HepG2 (cell line): ENCODE measurements at regions of chr7 and their contacts with region 1.

Region 1: GRCh38 chr7:37916673-37917660 is at the start of gene SFRP4:
- DNase-seq: peak; percentile 76
- ATAC-seq: peak; percentile 68
- H3K4me3 ChIP-seq: peak within 1 kb of the TSS; percentile 72 to 82 (median 73)
- H3K27ac ChIP-seq: peak within 1 kb of the TSS; percentile 65
- H3K4me1 ChIP-seq: peaks cover 45% of the 10 kb centered on the region
- H3K27me3 ChIP-seq: no peaks in the 10 kb centered on the region
- CTCF ChIP-seq: peak; percentile 83
- EP300 ChIP-seq: 0 out of 4 replicates have a peak, but pooled peaks of 1 of the 2 experiments have one; percentile 4
- POLR2A ChIP-seq: no peak; a peak in 1 of 4 replicates
- RAD21 ChIP-seq: peak; percentile 61; the same call in 1 of the 2 replicates
- total RNA-seq, gene SFRP4: 1.2 and 1.8 TPM in 2 replicates

Region 2: DNA sequence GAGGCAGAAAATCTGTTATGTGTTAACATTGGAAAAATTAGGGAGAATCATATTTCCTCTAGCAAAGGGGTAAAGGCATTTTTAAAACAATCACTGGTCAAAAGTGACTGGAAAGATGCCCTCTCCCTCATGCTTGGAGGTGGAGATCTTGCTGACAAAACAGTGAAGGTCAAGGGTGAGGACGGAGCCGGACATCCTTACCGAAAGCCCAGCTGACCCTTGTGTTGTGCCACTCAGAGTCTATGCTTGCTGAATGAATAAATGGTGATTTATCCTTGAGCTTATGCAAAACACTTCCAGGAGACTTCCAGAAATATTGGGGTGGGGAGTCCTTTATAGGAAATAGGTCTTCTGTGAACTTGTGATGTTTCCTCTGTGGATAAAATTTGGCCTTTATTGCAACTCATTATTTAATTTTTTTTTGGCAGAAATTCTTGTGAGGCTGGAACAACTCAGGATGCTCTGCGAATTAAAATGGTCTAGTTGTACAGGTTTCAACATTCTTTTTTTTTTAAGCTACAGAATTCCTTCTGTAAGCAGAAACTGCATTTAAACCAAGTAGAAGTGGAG is 440.0 kb before region 1 on chr7:
- CTCF ChIA-PET with region 1: no interaction called
- POLR2A ChIA-PET with region 1: no interaction called
- in situ Hi-C with region 1: no loop called
- intact Hi-C with region 1: no loop called
- DNase-seq: no peak
- ATAC-seq: no peak
- H3K4me3 ChIP-seq: no peak overlapping the region
- H3K27ac ChIP-seq: no peak overlapping the region
- H3K4me1 ChIP-seq: no peaks in the 10 kb centered on the region
- H3K27me3 ChIP-seq: no peaks in the 10 kb centered on the region
- CTCF ChIP-seq: no peak
- EP300 ChIP-seq: no peak
- POLR2A ChIP-seq: no peak
- RAD21 ChIP-seq: no peak

Region 3: DNA sequence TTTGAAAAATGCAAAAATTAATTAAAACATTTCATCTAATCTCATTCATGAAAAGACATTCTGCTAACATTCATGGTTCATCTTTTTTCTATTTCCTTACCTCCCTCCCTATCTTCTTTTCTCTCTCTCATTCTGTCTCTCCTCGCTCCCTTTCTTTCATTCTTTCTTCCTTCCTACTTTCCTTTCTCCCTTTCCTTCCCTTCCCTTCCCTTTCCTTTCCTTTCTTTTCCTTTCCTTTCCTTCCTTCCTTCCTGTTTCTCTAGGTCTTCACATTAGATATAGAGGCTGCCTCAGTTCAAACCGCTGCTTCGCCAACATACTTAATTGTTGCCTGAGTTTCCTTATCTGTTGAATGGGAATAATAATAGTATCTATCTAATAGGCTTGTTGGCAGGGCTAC is 22.3 kb before region 1 on chr7:
- CTCF ChIA-PET with region 1: no interaction called
- POLR2A ChIA-PET with region 1: no interaction called
- in situ Hi-C with region 1: no loop called
- intact Hi-C with region 1: no loop called
- DNase-seq: no peak
- ATAC-seq: no peak
- H3K4me3 ChIP-seq: no peak overlapping the region
- H3K27ac ChIP-seq: no peak overlapping the region
- H3K4me1 ChIP-seq: peaks cover under 1% of the 10 kb centered on the region; the same call in 1 of the 2 replicates
- H3K27me3 ChIP-seq: no peaks in the 10 kb centered on the region; a peak in 1 of 5 replicates
- CTCF ChIP-seq: no peak
- EP300 ChIP-seq: no peak
- POLR2A ChIP-seq: no peak
- RAD21 ChIP-seq: no peak

Region 4: DNA sequence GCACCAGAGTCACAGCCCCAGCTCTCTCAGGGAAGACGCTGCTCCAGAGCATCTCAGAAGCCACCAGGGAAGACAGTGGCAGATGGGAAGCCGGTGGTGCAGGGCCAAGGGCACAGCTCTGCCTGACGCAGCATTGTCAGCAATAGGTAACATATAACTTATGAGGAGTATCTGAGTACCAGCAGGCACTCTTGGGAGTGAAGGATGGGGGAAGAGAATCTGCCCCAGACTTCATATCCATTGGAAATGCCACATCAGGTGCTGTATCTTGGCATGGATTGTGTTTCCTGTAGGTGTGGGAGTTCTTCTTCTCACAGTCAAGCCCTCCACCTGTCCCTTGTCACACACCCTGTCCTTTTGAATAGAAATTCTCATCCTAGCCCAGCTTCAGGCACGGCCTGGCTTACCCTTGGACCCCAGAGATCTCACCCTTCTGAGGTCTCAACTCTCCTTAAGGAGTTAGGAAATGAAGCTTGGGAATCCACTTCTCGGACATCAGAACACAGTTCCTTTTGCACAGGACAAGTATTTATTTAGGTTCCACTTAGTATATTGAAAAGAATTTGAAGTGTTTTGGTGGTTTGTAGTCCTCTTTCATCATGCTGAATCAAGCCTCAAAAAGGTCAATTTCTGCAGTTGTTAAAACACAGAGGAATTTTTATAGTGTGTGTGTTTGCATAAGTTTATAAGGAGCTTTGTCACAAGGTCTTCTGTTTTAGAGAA is 13.4 kb after region 1 on chr7:
- CTCF ChIA-PET with region 1: no interaction called
- POLR2A ChIA-PET with region 1: interaction called, 14 read pairs
- in situ Hi-C with region 1: no loop called
- intact Hi-C with region 1: no loop called
- DNase-seq: no peak
- ATAC-seq: no peak
- H3K4me3 ChIP-seq: no peak overlapping the region
- H3K27ac ChIP-seq: no peak overlapping the region
- H3K4me1 ChIP-seq: peaks cover 29% of the 10 kb centered on the region
- H3K27me3 ChIP-seq: no peaks in the 10 kb centered on the region
- CTCF ChIP-seq: no peak
- EP300 ChIP-seq: no peak
- POLR2A ChIP-seq: no peak
- RAD21 ChIP-seq: no peak

Region 5: DNA sequence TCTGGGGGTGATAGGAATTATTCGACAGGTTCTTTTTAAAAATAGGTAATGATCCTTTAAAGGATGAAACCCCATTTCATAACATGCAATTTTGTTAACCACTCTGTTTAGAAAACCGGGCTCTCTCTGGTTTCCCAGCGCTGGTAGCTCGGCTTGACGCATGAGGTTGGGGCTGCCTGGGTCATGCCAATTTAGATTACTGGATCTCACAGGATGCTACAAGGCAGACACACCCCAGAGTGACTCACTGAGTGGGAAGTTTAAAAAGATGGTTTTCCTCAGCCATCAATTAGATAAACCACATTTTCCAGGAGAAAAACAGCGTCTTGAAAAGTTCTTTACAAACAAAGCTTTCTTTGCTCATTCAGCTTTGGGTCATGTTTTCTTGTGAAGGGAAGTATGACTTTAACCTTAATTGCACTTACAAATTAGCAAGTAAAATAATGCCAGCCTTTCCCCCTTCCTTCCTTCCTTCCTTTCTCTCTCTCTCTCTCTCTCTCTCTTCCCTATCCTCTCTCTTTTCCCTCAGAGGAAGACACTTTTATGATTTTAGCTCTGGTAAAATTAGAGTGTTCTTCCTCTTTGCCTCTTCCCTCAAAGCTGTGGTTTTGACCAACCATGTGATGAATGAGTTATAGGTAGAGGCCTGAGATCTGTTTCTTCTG is 103.3 kb after region 1 on chr7:
- CTCF ChIA-PET with region 1: no interaction called
- POLR2A ChIA-PET with region 1: no interaction called
- in situ Hi-C with region 1: no loop called
- intact Hi-C with region 1: loop called (anchors 2 kb)
- DNase-seq: no peak
- ATAC-seq: no peak
- H3K4me3 ChIP-seq: no peak overlapping the region
- H3K27ac ChIP-seq: no peak overlapping the region
- H3K4me1 ChIP-seq: no peaks in the 10 kb centered on the region
- H3K27me3 ChIP-seq: no peaks in the 10 kb centered on the region
- CTCF ChIP-seq: no peak
- EP300 ChIP-seq: no peak
- POLR2A ChIP-seq: no peak
- RAD21 ChIP-seq: no peak

Region 6: GRCh38 chr7:38178004-38178694 is 261.2 kb after region 1 on chr7 and contains the start of gene STARD3NL:
- CTCF ChIA-PET with region 1: no interaction called
- POLR2A ChIA-PET with region 1: interaction called, 11 read pairs
- in situ Hi-C with region 1: no loop called
- intact Hi-C with region 1: loop called (anchors 5 kb)
- DNase-seq: peak; percentile 99
- ATAC-seq: peak; percentile 99
- H3K4me3 ChIP-seq: peak within 1 kb of the TSS; percentile 81 to 94 (median 85)
- H3K27ac ChIP-seq: peak within 1 kb of the TSS; percentile 66
- H3K4me1 ChIP-seq: peaks cover 18% of the 10 kb centered on the region
- H3K27me3 ChIP-seq: no peaks in the 10 kb centered on the region; a peak in 1 of 5 replicates
- CTCF ChIP-seq: no peak
- EP300 ChIP-seq: no peak
- POLR2A ChIP-seq: peak; percentile 62 to 71
- RAD21 ChIP-seq: no peak
- total RNA-seq, gene STARD3NL: 38.2 and 42.3 TPM in 2 replicates